ENCODE measurements at regions of chr21 and their contacts with region 1.

Region 1: GRCh38 chr21:15121655-15122120 is 56.9 kb upstream of the NRIP1 start:
- DNase-seq: peak; percentile 83 to 88
- ATAC-seq: peak; percentile 90 to 91
- H3K4me3 ChIP-seq: peak overlapping the region; percentile 1 to 37 (median 18)
- H3K27ac ChIP-seq: peak overlapping the region; percentile 76 to 90 (median 88)
- H3K4me1 ChIP-seq: peaks cover 22 to 26% of the 10 kb centered on the region in 2 donors
- H3K27me3 ChIP-seq: no peaks in the 10 kb centered on the region
- CTCF ChIP-seq: no peak
- POLR2A ChIP-seq: no peak

Region 2: GRCh38 chr21:14864211-14865021 is 257.3 kb before region 1 on chr21:
- in situ Hi-C with region 1: no loop called
- intact Hi-C with region 1: loop called (anchors 5 kb)
- DNase-seq: peak; percentile 59 to 76
- ATAC-seq: peak; percentile 97 to 98
- H3K4me3 ChIP-seq: no peak overlapping the region
- H3K27ac ChIP-seq: peak overlapping the region in 2 of 4 donors; percentile 8 to 34
- H3K4me1 ChIP-seq: peaks cover 13% of the 10 kb centered on the region in 2 donors
- H3K27me3 ChIP-seq: no peaks in the 10 kb centered on the region
- CTCF ChIP-seq: peak; percentile 41 to 74 (median 56)
- POLR2A ChIP-seq: no peak

Region 3: GRCh38 chr21:15005391-15005790 is 116.3 kb before region 1 on chr21:
- in situ Hi-C with region 1: no loop called
- intact Hi-C with region 1: loop called (anchors 5 kb)
- DNase-seq: no peak
- ATAC-seq: no peak
- H3K4me3 ChIP-seq: no peak overlapping the region
- H3K27ac ChIP-seq: peak overlapping the region in 3 of 4 donors; percentile 42 to 84 (median 82)
- H3K4me1 ChIP-seq: peaks cover 64 to 86% of the 10 kb centered on the region in 2 donors
- H3K27me3 ChIP-seq: no peaks in the 10 kb centered on the region
- CTCF ChIP-seq: no peak
- POLR2A ChIP-seq: no peak

Region 4: GRCh38 chr21:15080508-15080907 is 41.2 kb before region 1 on chr21:
- in situ Hi-C with region 1: no loop called
- intact Hi-C with region 1: no loop called
- DNase-seq: no peak
- ATAC-seq: no peak
- H3K4me3 ChIP-seq: no peak overlapping the region
- H3K27ac ChIP-seq: no peak overlapping the region
- H3K4me1 ChIP-seq: no peaks in the 10 kb centered on the region
- H3K27me3 ChIP-seq: no peaks in the 10 kb centered on the region
- CTCF ChIP-seq: no peak
- POLR2A ChIP-seq: no peak

Region 5: DNA sequence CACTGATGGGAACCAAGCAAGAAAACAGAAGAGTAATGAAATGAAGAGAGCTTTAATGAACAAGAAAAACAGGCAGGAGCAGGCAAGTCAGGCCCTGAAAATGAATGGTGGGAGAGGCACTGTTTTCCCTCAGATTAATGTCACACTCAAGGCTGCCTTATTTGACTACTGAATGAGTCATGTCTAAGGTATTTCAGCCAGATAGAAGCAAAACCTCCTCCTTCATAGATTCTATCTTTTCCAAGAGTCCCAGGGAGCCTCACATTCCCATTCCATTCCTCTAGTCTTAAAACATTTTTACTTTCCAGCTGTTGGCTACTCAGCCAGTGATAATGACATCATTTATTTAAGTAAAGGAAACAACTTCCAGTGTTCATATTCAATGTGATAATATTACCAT is 171.6 kb after region 1 on chr21:
- in situ Hi-C with region 1: no loop called
- intact Hi-C with region 1: loop called (anchors 5 kb)
- DNase-seq: no peak
- ATAC-seq: no peak
- H3K4me3 ChIP-seq: no peak overlapping the region
- H3K27ac ChIP-seq: no peak overlapping the region
- H3K4me1 ChIP-seq: peaks cover 0 to 2% of the 10 kb centered on the region in 2 donors
- H3K27me3 ChIP-seq: no peaks in the 10 kb centered on the region
- CTCF ChIP-seq: no peak
- POLR2A ChIP-seq: no peak

Region 6: DNA sequence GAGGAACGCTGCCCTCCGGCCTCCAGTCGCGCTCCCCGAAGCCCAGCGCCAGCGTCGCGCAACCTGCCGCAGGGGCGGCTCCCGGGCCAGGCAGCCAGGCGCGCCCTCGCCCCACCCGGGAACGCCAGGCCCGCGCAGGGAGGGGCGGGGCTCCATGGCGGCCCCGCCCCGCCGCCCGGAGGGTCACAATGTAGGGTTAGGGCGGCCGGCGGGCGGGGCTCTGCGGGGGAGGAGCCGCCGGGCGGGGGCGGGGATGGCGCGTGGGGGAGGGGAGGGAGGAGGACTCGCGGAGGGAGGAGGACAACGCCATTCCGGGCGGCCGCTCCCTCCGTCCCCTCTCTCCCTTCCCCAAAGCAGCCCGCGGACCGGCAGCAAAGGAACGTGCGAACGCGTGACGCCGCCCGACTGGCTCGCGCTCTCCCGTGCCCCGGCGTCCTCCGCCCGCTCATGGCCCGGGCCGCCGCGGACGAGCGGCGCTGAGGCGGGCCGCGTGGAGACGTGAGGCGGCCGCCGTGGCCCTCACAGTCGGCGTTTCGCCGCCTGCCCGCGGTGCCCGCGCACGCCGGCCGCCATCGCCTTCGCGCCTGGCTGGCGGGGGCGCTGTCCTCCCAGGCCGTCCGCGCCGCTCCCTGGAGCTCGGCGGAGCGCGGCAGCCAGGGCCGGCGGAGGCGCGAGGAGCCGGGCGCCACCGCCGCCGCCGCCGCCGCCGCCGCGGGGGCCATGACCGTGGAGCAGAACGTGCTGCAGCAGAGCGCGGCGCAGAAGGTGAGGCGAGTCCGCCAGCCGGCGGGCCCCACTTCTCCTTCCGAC is 608.2 kb after region 1 on chr21 and contains the start of gene USP25:
- in situ Hi-C with region 1: no loop called
- intact Hi-C with region 1: loop called (anchors 10 kb)
- DNase-seq: peak; percentile 91 to 93
- ATAC-seq: peak; percentile 86
- H3K4me3 ChIP-seq: peak within 1 kb of the TSS; percentile 60 to 83 (median 78)
- H3K27ac ChIP-seq: peak within 1 kb of the TSS; percentile 92 to 95 (median 94)
- H3K4me1 ChIP-seq: peaks cover 13 to 22% of the 10 kb centered on the region in 2 donors
- H3K27me3 ChIP-seq: no peaks in the 10 kb centered on the region
- CTCF ChIP-seq: peak in 3 of 5 experiments; percentile 16 to 42 (median 28)
- POLR2A ChIP-seq: peak; percentile 87 to 95
- total RNA-seq, gene USP25: 99.4 to 130 (median 107) TPM

Measured in gastrocnemius medialis (tissue), 4 donors.